Gastrocnemius medialis (tissue), 4 donors: ENCODE measurements at regions of chr1 and their contacts with region 1.

Region 1: DNA sequence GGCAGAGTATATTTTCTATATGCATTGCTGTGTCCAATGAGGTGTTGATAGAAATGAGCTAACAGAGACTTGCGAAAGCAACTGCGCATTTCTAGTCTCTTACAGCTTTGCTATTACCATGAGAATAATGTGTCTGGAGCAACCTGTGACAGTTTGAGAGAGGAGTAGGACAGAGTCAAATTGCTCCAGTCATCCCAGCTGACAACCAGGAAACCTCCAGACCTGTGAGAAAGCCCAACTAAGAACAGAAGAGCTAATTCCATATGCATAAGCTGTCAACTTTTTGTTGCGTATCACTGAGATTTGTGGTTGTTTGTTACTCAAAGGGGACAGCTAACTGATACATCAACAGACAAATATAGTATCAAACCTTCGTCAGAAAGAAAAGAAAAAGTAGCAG is 354.1 kb upstream of the LRRC7 start:
- DNase-seq: no peak
- ATAC-seq: no peak
- H3K4me3 ChIP-seq: no peak overlapping the region
- H3K27ac ChIP-seq: no peak overlapping the region
- H3K4me1 ChIP-seq: no peaks in the 10 kb centered on the region
- H3K27me3 ChIP-seq: no peaks in the 10 kb centered on the region
- CTCF ChIP-seq: no peak
- POLR2A ChIP-seq: no peak

Region 2: DNA sequence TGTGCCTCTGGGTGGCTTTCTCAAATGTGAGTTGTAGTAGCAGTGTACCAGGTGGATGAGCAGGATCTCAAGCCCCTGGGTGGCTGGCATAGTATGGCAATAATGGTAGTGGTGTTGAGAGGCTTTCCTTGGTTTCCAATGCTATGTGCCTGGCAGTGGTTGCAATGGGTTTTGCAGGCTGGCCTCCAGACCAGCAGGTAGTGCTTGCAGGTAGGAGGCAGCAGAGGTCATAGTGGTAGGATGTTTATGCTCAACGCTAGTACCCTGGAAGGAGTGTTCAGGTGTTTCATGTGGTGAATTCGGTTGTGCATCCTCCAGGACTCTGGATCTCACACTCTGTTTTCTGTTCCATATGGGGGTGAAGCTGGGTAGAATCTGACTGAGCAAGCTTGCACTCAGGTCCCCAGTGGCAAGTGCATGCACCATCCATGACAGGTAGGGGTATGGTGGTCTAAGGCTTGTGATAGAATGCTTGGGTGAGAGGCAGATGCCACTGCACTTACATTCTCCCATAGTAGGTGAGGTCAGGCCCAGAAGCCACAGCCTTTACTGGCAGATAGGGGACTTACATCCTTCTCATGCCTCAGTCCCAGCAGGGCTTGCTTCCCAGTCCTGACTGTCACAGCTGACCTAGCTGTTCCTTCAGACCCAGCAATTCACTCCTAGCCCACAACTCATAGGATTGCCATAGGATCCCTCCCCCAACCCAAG is 56.4 kb before region 1 on chr1:
- in situ Hi-C with region 1: loop called in 1 of 4 experiments (anchors 10 kb)
- intact Hi-C with region 1: no loop called
- DNase-seq: no peak
- ATAC-seq: no peak
- H3K4me3 ChIP-seq: no peak overlapping the region
- H3K27ac ChIP-seq: no peak overlapping the region
- H3K4me1 ChIP-seq: no peaks in the 10 kb centered on the region
- H3K27me3 ChIP-seq: no peaks in the 10 kb centered on the region
- CTCF ChIP-seq: no peak
- POLR2A ChIP-seq: no peak

Region 3: GRCh38 chr1:69305621-69306020 is 92.0 kb after region 1 on chr1:
- in situ Hi-C with region 1: no loop called
- intact Hi-C with region 1: no loop called
- DNase-seq: no peak
- ATAC-seq: no peak
- H3K4me3 ChIP-seq: no peak overlapping the region
- H3K27ac ChIP-seq: no peak overlapping the region
- H3K4me1 ChIP-seq: no peaks in the 10 kb centered on the region
- H3K27me3 ChIP-seq: no peaks in the 10 kb centered on the region
- CTCF ChIP-seq: no peak
- POLR2A ChIP-seq: no peak

Region 4: GRCh38 chr1:69438056-69438795 is 224.6 kb after region 1 on chr1:
- in situ Hi-C with region 1: no loop called
- intact Hi-C with region 1: no loop called
- DNase-seq: no peak
- ATAC-seq: no peak
- H3K4me3 ChIP-seq: no peak overlapping the region
- H3K27ac ChIP-seq: no peak overlapping the region
- H3K4me1 ChIP-seq: no peaks in the 10 kb centered on the region
- H3K27me3 ChIP-seq: no peaks in the 10 kb centered on the region
- CTCF ChIP-seq: no peak
- POLR2A ChIP-seq: no peak